ENCODE measurements at regions of chr10 and their contacts with region 1.

Region 1: GRCh38 chr10:5629303-5630111 is 36.9 kb downstream of the ASB13 start:
- DNase-seq: peak; percentile 66 to 84 (median 75)
- H3K4me3 ChIP-seq: no peak overlapping the region
- H3K4me3 Mint-ChIP-seq: peak overlapping the region in 3 of 7 donors; percentile 16 to 61 (median 37)
- H3K27ac ChIP-seq: no peak overlapping the region
- H3K27ac Mint-ChIP-seq: peak overlapping the region in 2 of 8 donors; percentile 20 to 76
- H3K4me1 ChIP-seq: peaks cover 8% of the 10 kb centered on the region
- H3K4me1 Mint-ChIP-seq: peaks cover 6 to 16% (median 12%) of the 10 kb centered on the region in 3 donors
- H3K27me3 ChIP-seq: no peaks in the 10 kb centered on the region
- H3K27me3 Mint-ChIP-seq: peaks cover 5 to 20% of the 10 kb centered on the region in 2 donors

Region 2: GRCh38 chr10:5446390-5446926 is 183.0 kb before region 1 on chr10:
- CTCF ChIA-PET with region 1: interaction called, 122 read pairs
- POLR2A ChIA-PET with region 1: no interaction called
- DNase-seq: peak in 4 of 5 donors; percentile 8 to 76 (median 39)
- H3K4me3 ChIP-seq: peak overlapping the region; percentile 63
- H3K4me3 Mint-ChIP-seq: peak overlapping the region in 6 of 7 donors; percentile 20 to 73 (median 62)
- H3K27ac ChIP-seq: peak overlapping the region; percentile 43
- H3K27ac Mint-ChIP-seq: peak overlapping the region in 2 of 8 donors; percentile 15 to 48
- H3K4me1 ChIP-seq: peaks cover 19% of the 10 kb centered on the region
- H3K4me1 Mint-ChIP-seq: peaks cover 22 to 32% (median 30%) of the 10 kb centered on the region in 3 donors
- H3K27me3 ChIP-seq: no peaks in the 10 kb centered on the region
- H3K27me3 Mint-ChIP-seq: no peaks in the 10 kb centered on the region

Region 3: DNA sequence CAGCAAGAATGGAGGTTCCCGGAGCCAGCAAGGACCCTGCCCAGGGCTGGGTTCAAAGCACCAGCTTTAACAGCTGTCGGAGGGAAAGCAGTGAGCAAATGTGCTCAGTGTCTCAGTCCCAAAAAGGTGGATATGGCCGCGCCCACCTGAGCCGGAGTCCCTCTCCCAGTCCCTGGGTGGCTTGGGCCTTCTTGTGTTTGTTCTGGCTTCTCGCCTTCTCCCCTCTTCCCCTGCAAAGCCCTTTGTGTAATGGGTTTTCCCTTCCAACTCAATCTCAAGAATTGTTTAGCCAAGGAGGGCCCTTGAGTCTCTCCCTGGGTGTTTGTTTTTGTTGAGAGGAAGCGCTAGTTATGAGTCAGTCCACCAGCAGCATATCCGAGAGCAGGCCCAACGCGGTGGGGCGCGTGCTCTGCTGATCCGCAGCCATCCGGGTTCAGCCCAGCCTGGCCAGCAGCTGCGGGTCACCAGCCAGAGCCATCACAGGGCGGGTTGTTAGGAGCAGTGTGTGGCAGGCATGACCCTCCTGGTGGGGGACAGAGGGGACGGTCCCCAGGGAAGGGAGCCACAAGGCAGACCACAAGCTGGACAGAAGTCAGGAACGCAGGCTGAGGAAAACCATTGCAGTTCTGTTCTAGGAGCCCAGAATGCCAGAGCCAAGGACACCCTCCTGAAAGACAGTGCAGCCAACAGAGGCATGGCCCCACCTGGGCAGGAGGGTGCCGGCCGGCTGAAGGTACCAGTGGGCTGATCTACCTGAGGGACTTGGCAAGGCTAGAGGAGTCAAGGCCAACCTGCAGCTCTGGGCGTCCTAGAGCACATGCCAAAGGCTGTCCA is 83.5 kb before region 1 on chr10:
- CTCF ChIA-PET with region 1: no interaction called
- POLR2A ChIA-PET with region 1: no interaction called
- DNase-seq: no peak
- H3K4me3 ChIP-seq: no peak overlapping the region
- H3K4me3 Mint-ChIP-seq: peak overlapping the region in 1 of 7 donors; percentile 61
- H3K27ac ChIP-seq: no peak overlapping the region
- H3K27ac Mint-ChIP-seq: no peak overlapping the region
- H3K4me1 ChIP-seq: peaks cover 19% of the 10 kb centered on the region
- H3K4me1 Mint-ChIP-seq: peaks cover 0 to 4% (median 3%) of the 10 kb centered on the region in 3 donors
- H3K27me3 ChIP-seq: no peaks in the 10 kb centered on the region
- H3K27me3 Mint-ChIP-seq: peaks cover 3 to 6% of the 10 kb centered on the region in 2 donors

Region 4: GRCh38 chr10:5643346-5644067 is 14.0 kb after region 1 on chr10:
- CTCF ChIA-PET with region 1: interaction called, 16 read pairs
- POLR2A ChIA-PET with region 1: no interaction called
- DNase-seq: peak in 1 of 5 donors; percentile 11
- H3K4me3 ChIP-seq: no peak overlapping the region
- H3K4me3 Mint-ChIP-seq: no peak overlapping the region
- H3K27ac ChIP-seq: no peak overlapping the region
- H3K27ac Mint-ChIP-seq: peak overlapping the region in 1 of 8 donors; percentile 51
- H3K4me1 ChIP-seq: no peaks in the 10 kb centered on the region
- H3K4me1 Mint-ChIP-seq: no peaks in the 10 kb centered on the region
- H3K27me3 ChIP-seq: no peaks in the 10 kb centered on the region
- H3K27me3 Mint-ChIP-seq: no peaks in the 10 kb centered on the region

Region 5: GRCh38 chr10:5873515-5873995 is 244.0 kb after region 1 on chr10:
- CTCF ChIA-PET with region 1: interaction called, 22 read pairs
- POLR2A ChIA-PET with region 1: no interaction called
- DNase-seq: peak; percentile 26 to 70 (median 46)
- H3K4me3 ChIP-seq: no peak overlapping the region
- H3K4me3 Mint-ChIP-seq: peak overlapping the region in 1 of 7 donors; percentile 21
- H3K27ac ChIP-seq: no peak overlapping the region
- H3K27ac Mint-ChIP-seq: no peak overlapping the region
- H3K4me1 ChIP-seq: no peaks in the 10 kb centered on the region
- H3K4me1 Mint-ChIP-seq: peaks cover 4 to 6% (median 4%) of the 10 kb centered on the region in 3 donors
- H3K27me3 ChIP-seq: no peaks in the 10 kb centered on the region
- H3K27me3 Mint-ChIP-seq: no peaks in the 10 kb centered on the region

Measured in CD8-positive, alpha-beta memory T cell (primary cell).